Prostate gland (tissue), 2 donors: ENCODE measurements at regions of chr1 and their contacts with region 1.

Region 1: DNA sequence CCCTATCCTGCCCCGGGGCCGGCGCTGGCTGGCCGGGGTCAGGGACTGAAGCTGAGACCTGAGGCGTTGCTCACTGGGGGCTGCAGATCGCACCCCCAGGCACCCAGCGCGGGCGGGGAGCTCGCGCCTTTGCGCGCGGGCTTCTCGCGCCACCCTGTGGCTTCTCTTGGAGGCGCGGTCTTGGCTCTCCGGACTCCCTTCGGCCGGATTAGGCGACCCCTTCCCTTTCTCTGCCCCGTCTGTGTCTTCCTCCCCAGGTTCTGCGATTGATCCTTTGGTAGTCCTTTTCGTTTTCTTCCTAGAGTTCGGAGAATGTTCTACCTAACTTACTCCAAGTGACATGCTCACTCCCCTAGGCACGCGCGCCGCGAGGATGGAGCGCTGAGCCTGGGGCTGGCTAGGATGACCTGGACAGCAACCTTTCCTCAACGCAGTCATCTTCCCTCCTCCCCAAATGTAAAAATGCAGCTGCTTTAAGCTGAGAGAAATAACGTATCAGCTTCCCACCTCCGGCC is 495 bp upstream of the NTRK1 start:
- DNase-seq: peak; percentile 14
- H3K4me3 ChIP-seq: peak overlapping the region; percentile 4 to 11
- H3K27ac ChIP-seq: no peak overlapping the region
- H3K4me1 ChIP-seq: peaks cover 17% of the 10 kb centered on the region
- H3K27me3 ChIP-seq: peaks cover 14% of the 10 kb centered on the region
- CTCF ChIP-seq: peak; percentile 42 to 78 (median 71)
- POLR2A ChIP-seq: no peak

Region 2: GRCh38 chr1:156692925-156693847 is 167.0 kb before region 1 on chr1:
- intact Hi-C with region 1: loop called (anchors 10 kb)
- DNase-seq: peak; percentile 39
- H3K4me3 ChIP-seq: no peak overlapping the region
- H3K27ac ChIP-seq: peak overlapping the region; percentile 24 to 54
- H3K4me1 ChIP-seq: peaks cover 8% of the 10 kb centered on the region
- H3K27me3 ChIP-seq: peaks cover 4% of the 10 kb centered on the region
- CTCF ChIP-seq: no peak
- POLR2A ChIP-seq: peak; percentile 38

Region 3: GRCh38 chr1:156801409-156802121 is 58.6 kb before region 1 on chr1:
- intact Hi-C with region 1: loop called (anchors 5 kb)
- DNase-seq: no peak
- H3K4me3 ChIP-seq: no peak overlapping the region
- H3K27ac ChIP-seq: no peak overlapping the region
- H3K4me1 ChIP-seq: peaks cover 4% of the 10 kb centered on the region
- H3K27me3 ChIP-seq: no peaks in the 10 kb centered on the region
- CTCF ChIP-seq: peak in 1 of 4 experiments; percentile 22
- POLR2A ChIP-seq: no peak